IMR-90 (cell line): ENCODE measurements at regions of chr6 and their contacts with region 1.

Region 1: DNA sequence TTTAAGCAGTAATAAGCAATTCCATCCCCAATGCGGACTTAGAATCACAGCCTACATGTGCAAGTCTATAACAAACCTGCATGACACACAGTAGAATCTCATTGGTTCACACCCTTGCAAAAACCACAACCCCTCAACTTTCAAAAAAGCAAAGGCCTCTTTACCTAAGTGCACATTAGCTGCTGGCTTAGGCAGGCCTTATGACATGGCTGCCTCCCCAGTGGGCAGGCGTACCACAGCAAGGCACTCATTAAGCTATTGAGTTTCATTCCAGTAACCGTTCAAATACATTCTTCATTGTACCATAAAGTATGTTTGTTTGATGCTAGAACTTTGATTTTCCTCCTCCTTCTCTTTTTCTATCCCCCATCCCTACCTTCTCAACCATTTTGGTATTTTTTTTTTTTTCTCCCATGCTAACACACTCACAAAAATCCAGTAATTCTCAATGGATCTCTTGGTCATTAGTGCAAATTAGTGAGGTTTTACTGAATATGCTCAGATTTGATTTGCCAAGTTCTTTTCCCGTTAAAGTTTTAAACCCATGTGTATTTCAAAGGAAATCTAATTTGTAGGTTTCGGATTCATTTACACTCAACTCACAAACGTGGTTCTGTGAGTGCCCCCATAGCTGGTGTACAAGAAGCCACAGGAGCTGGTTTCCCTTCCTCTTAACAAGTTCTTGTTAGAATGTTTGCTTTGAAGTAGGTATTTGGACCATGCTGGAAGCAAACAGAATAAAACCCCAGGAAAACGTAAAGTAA is 460.4 kb upstream of the RUNX2 start:
- DNase-seq: no peak
- ATAC-seq: no peak
- H3K4me3 ChIP-seq: no peak overlapping the region
- H3K27ac ChIP-seq: no peak overlapping the region
- H3K4me1 ChIP-seq: no peaks in the 10 kb centered on the region
- H3K27me3 ChIP-seq: no peaks in the 10 kb centered on the region
- CTCF ChIP-seq: no peak
- POLR2A ChIP-seq: no peak
- RAD21 ChIP-seq: no peak

Region 2: DNA sequence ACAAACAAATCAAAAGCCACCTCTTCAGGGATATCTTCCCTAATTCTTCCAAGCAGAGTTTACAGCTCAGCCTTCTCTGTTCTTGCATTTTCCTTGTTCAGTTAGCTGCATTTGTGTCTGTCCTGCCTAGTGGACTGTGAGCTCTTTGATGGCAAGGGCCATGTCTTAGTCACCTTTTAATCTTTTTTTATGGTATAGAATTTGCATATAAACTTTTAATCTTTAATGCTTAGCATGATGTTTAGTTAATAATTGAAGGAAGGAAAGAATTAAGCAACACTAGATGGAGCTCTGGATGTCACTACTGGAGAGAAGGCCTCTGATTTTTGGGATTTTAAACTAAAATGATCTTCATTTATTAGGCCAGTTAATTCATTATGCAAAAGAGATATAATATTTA is 1871.2 kb before region 1 on chr6:
- CTCF ChIA-PET with region 1: no interaction called
- POLR2A ChIA-PET with region 1: no interaction called
- dilution Hi-C with region 1: no loop called
- in situ Hi-C with region 1: no loop called
- intact Hi-C with region 1: no loop called
- DNase-seq: no peak
- ATAC-seq: peak; percentile 35; the same call in 1 of the 2 replicates
- H3K4me3 ChIP-seq: no peak overlapping the region
- H3K27ac ChIP-seq: no peak overlapping the region
- H3K4me1 ChIP-seq: no peaks in the 10 kb centered on the region
- H3K27me3 ChIP-seq: no peaks in the 10 kb centered on the region
- CTCF ChIP-seq: peak; percentile 19; the same call in 1 of the 2 replicates
- POLR2A ChIP-seq: no peak
- RAD21 ChIP-seq: no peak

Region 3: DNA sequence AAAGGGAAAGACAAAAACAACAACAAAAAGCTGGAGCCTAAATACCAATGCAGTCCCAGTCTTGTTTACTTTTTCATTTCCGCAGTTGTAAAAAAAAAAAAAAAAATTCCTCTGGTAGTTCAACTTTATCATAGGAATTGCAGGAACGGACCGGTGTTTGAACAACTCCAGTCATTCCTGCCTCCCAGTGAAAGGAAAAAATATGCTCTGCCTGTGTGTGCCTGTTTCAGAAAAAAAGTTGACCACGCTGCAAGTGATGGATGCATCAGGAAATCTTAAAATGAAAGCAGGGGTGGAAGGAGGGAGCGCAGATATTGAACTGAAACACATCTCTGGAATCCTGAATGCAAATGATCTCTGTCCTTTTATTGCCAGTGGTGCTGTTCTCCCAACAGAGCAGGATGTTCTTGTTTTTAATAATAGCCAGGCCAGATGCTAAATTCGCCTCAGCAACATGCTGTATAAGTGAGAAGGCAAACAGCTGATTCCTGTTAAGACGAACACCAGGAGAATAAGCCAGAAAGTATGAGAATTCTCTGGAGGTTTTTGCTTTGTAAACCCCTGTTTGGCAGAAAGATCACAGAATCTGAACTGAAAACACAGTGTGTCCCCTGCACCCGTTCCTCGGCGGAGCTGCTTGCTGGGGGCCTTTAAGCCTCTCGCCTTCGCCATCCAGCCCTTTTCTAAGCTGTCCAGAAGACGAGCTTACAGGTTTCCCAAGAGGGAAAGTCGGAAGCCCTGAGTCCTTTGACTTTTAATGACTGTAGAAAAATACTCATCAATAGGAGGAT is 688.4 kb after region 1 on chr6:
- CTCF ChIA-PET with region 1: no interaction called
- POLR2A ChIA-PET with region 1: interaction called, 13 read pairs
- dilution Hi-C with region 1: no loop called
- in situ Hi-C with region 1: no loop called
- intact Hi-C with region 1: no loop called
- DNase-seq: peak; percentile 60
- ATAC-seq: peak; percentile 64
- H3K4me3 ChIP-seq: peak overlapping the region; percentile 37
- H3K27ac ChIP-seq: peak overlapping the region; percentile 62
- H3K4me1 ChIP-seq: peaks cover 16% of the 10 kb centered on the region
- H3K27me3 ChIP-seq: no peaks in the 10 kb centered on the region
- CTCF ChIP-seq: no peak
- POLR2A ChIP-seq: no peak
- RAD21 ChIP-seq: no peak